Calu3 (cell line): ENCODE measurements at regions of chr10 and their contacts with region 1.

Region 1: GRCh38 chr10:114779803-114780609 is 41.6 kb upstream of the FHIP2A start:
- DNase-seq: no peak
- H3K4me3 Mint-ChIP-seq: peak overlapping the region; percentile 39
- H3K27ac Mint-ChIP-seq: peak overlapping the region; percentile 95
- H3K4me1 Mint-ChIP-seq: peaks cover 45% of the 10 kb centered on the region
- H3K27me3 Mint-ChIP-seq: no peaks in the 10 kb centered on the region
- CTCF ChIP-seq: no peak

Region 2: DNA sequence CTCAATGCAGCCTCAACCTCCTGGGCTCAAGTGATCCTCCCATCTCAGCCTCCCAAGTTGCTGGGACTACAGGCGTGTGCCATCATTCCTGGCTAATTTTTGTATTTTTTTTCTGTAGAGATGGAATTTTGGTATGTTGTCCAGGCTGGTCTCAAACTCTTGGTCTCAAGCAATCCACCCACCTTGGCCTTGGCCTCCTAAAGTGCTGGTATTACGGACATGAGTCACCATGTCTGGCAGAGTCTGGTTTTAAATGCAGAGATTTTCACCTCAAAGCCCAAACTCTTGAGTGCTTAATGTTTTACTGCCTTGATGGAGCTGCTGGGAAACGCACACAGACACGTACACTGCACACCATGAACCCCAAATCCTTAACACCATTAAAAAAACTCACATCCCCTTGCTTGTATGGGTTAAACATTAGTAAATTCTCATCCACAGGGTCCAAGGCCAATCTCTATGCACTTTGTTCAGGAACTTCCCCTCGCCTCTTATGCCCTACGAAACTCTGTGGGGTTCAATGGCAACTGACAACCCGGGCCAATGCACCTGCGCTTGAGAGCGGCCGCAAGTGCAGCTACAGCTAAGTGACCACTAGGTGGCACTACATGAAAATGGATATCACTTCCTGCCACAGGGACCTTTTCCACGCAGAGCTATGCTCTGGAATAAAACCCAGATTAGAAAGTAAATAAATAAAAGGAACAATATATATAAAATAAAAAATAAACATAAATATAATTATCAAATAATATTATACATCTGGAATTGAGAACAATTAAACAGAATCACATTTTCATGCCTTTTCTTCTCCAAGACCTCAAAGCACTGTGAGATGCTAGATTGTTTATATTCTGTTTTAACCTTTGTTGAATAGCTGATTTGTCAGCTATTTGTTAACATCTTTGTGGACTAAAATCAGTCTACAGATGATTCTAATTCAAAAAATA is 308.8 kb before region 1 on chr10:
- CTCF ChIA-PET with region 1: no interaction called
- intact Hi-C with region 1: loop called (anchors 5 kb)
- DNase-seq: peak; percentile 52
- H3K4me3 Mint-ChIP-seq: no peak overlapping the region
- H3K27ac Mint-ChIP-seq: peak overlapping the region; percentile 71
- H3K4me1 Mint-ChIP-seq: peaks cover 15% of the 10 kb centered on the region
- H3K27me3 Mint-ChIP-seq: no peaks in the 10 kb centered on the region
- CTCF ChIP-seq: peak; percentile 48

Region 3: DNA sequence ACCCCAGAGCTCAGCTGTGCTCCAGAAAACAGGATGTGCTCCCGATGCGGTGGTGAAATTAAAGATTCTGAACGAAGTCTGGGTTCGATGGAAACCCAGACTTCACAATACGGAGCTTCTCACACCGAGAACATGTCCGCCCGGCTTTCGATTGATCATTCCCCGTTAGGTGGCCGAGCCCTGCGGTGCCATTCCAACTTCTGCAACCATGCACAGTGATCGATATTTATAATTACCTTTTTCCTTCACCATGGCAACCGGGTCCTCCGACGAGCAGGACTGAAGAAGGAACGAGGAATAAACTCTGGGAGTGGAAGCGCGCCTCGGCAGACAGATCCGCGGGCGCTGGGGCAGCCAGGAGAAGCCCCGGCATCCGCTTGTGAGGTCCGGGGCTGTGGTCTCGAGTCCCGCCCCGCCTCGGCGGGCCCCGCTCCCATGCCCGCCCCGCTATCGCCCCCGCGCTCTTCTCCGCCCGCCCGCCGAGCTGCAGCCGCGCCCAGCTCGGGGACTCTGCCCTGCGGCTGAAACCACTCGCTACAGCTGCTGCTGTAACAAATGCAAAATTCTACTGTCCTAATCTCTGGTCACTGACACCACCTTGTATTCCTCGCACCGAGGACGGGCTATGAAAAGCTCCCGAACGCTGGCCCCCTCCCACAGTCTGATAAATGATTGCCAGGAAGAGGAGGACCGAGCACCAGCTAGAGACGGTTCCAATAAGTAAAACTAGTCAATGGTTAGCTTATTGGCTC is 148.2 kb before region 1 on chr10:
- CTCF ChIA-PET with region 1: no interaction called
- intact Hi-C with region 1: loop called (anchors 5 kb)
- DNase-seq: peak; percentile 39
- H3K4me3 Mint-ChIP-seq: peak overlapping the region; percentile 87
- H3K27ac Mint-ChIP-seq: peak overlapping the region; percentile 81
- H3K4me1 Mint-ChIP-seq: peaks cover 61% of the 10 kb centered on the region
- H3K27me3 Mint-ChIP-seq: no peaks in the 10 kb centered on the region
- CTCF ChIP-seq: no peak

Region 4: DNA sequence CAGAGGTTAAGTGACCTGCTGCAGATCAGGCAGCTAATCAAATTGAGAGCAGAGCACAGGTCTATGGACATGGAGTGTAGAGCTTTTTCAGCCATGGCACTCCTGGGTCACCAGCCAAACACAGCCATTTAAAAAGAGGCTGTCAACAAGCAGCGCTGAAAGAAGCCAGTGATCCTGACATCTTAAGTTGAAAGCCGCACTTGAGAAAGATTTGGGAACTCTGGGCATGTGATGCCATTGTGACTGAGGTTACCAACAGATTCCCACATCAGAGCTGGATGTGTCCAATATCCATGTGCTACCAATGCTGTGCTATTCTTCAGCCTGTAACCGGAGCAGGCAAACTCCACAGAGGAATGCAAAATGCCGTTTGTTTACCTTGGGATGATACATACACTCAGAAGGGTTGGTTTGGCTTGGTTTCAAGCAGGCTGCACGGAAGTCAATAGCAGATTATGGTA is 65.7 kb before region 1 on chr10:
- CTCF ChIA-PET with region 1: interaction called, 4 read pairs
- intact Hi-C with region 1: loop called (anchors 5 kb)
- DNase-seq: peak; percentile 48
- H3K4me3 Mint-ChIP-seq: no peak overlapping the region
- H3K27ac Mint-ChIP-seq: no peak overlapping the region
- H3K4me1 Mint-ChIP-seq: peaks cover 29% of the 10 kb centered on the region
- H3K27me3 Mint-ChIP-seq: no peaks in the 10 kb centered on the region
- CTCF ChIP-seq: no peak